Psoas muscle (tissue), 8 donors: ENCODE measurements at regions of chr19 and their contacts with region 1.

Region 1: DNA sequence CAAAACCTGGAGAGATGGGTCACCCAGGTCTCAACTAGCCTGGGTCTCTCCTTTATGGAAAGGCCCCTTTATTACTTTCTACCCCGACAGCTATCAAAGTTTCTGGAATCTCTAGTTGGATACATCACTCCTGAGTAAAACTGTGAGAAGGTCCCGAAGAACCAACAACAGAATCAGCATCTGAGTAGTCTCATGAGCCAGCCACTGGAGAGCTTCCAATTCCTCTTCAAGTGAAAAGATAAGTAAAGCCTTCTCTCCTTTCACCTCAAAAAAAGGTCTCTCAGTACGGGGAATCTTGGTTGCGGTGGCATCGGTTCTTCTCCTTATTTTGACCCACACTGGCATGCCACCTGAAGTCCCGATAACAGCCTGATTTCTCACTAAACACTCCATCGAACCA is at the start of gene ERVV-1:
- DNase-seq: no peak
- ATAC-seq: no peak
- H3K4me3 ChIP-seq: no peak within 1 kb of the TSS
- H3K27ac ChIP-seq: no peak within 1 kb of the TSS
- H3K4me1 ChIP-seq: no peaks in the 10 kb centered on the region
- H3K27me3 ChIP-seq: no peaks in the 10 kb centered on the region
- CTCF ChIP-seq: no peak
- total RNA-seq, gene ERVV-1: not detected

Region 2: GRCh38 chr19:53047379-53047778 is 33.8 kb after region 1 on chr19:
- intact Hi-C with region 1: loop called in 1 of 2 experiments (anchors 2 kb)
- DNase-seq: no peak
- ATAC-seq: no peak
- H3K4me3 ChIP-seq: no peak overlapping the region
- H3K27ac ChIP-seq: no peak overlapping the region
- H3K4me1 ChIP-seq: no peaks in the 10 kb centered on the region
- H3K27me3 ChIP-seq: no peaks in the 10 kb centered on the region
- CTCF ChIP-seq: no peak